ENCODE measurements at regions of chr1 and their contacts with region 1.

Region 1: DNA sequence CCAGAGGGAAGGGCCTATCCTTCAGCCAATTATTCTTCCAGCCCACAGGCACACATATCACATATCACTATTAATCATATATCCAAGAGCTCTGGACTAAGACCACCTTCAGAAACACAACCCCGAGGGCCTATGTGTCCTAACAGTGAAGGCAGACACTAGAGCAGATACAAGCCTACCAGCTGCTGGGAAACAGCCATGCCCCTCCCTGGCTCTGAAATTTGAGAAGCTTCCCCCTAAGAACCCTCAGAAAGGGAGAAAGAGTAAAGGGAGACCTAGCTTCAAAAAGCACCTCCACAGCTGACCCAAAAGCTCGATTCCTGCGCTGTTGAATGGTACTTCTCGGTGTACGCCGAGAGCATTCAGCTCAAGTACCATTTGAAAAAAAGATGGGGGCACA is 17.4 kb downstream of the CNN3 start:
- DNase-seq: no peak
- ATAC-seq: peak in 1 of 4 donors; percentile 30
- H3K4me3 ChIP-seq: no peak overlapping the region
- H3K27ac ChIP-seq: no peak overlapping the region
- H3K4me1 ChIP-seq: peaks cover 0 to 97% (median 41%) of the 10 kb centered on the region in 12 donors
- H3K27me3 ChIP-seq: no peaks in the 10 kb centered on the region
- CTCF ChIP-seq: no peak
- POLR2A ChIP-seq: no peak

Region 2: DNA sequence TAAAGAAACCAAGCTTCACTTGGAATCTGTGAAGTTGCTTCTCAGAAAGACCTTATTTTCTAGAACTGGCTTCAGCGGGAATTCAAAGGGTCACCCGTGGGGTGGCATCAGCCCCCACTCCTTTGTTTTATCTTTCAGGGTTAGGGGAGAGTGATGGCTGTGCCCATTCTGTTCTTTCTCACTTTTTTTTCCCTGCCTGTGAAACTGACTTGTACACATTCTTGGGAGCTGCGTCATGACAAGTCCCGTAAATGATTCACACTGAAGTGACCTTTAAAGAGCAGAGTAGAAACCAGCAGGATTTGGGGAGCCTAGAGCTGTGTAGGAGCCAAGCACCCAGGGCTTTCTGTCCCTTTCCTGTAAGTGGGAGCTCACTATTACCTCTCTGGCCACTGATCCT is 45.6 kb before region 1 on chr1:
- intact Hi-C with region 1: loop called in 2 of 10 experiments (anchors 5 to 10 kb)
- DNase-seq: peak in 1 of 5 donors; percentile 65
- ATAC-seq: peak; percentile 56 to 92 (median 79)
- H3K4me3 ChIP-seq: peak overlapping the region in 2 of 12 donors; percentile 7 to 15
- H3K27ac ChIP-seq: peak overlapping the region; percentile 58 to 89 (median 80)
- H3K4me1 ChIP-seq: peaks cover 0 to 75% (median 31%) of the 10 kb centered on the region in 12 donors
- H3K27me3 ChIP-seq: no peaks in the 10 kb centered on the region
- CTCF ChIP-seq: no peak
- POLR2A ChIP-seq: no peak

Region 3: DNA sequence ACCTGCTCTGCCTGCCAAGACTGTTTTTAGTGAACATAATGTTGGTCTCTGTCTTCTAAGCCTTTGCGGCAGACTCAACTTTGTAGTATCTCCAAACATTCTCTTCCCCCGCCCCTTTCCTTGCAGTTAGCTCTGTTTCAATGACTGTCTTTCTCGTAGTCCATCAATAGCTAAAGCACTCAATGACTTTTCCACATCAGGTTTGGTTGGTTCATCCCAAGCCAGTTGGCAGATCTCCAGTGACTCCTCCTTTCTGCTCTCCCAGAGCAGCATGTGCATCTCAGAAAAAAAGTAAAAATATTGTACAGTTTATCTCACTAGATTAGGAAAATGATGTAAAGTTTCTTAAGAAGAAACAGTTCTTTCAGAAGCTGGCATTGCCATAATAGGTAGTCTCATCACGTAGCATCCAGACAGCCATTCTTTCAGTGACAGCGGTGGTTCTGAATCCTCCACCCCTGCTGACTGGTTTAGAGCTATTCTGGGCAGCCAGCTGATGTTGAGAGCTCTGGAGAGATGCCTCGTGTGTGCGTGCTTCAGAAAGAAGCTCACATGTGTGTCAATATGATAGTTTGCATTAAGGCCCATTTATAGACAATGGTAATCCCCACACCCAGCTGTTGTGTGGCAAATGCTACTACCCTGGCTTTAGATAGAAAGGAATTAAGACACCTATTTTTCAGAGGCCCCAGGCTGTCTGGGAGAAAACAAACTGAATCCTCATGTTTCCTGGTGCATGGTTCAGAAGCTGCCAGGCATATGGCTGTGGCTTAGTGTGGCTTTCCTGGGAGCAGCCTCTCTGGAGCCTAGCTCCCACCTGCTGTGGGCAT is 35.7 kb before region 1 on chr1:
- intact Hi-C with region 1: loop called in 3 of 10 experiments (anchors 2 to 5 kb)
- DNase-seq: peak in 2 of 5 donors; percentile 52 to 62
- ATAC-seq: peak; percentile 81 to 95 (median 82)
- H3K4me3 ChIP-seq: no peak overlapping the region
- H3K27ac ChIP-seq: peak overlapping the region in 6 of 12 donors; percentile 2 to 64 (median 56)
- H3K4me1 ChIP-seq: peaks cover 0 to 14% (median 8%) of the 10 kb centered on the region in 12 donors
- H3K27me3 ChIP-seq: no peaks in the 10 kb centered on the region
- CTCF ChIP-seq: no peak
- POLR2A ChIP-seq: no peak

Measured in heart left ventricle (tissue), 16 donors.